Gastrocnemius medialis (tissue), 4 donors: ENCODE measurements at regions of chr6 and their contacts with region 1.

Region 1: DNA sequence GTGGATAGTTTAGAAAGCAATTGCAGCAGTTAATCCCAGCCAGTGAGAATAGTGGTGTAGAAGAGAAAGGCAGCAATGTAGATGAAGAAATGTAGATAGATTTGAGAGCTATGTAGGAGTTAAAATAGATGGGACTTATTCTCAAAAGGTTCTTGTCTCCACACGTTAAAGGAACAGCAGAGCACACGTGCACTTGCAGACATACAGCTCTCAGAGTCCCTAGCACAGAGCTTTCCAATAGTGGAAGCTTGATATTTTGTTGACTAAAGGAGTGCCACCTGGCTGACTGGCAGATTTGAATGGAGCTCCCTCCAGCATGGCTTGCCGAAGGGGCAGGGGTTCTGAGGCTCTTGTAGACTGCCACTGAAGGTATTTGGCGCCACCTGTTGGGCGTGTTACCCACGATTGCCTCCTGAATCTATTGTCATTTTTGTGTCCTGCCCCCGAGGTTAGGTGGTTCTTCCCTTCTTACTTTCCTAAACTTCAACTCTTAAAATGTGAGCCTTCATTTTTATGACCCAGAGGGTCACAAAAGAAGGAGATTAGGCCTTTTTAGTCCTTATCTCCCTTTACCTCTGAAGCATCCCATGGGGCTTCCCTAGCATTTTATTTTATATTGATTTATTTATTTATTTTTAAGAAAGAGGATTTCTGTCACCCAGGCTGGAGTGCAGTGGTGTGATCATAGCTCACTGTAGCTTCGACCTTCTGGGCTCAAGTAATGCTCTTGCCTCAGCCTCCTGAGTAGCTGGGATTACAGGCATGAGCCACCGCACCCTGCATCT is 16.4 kb downstream of the BRD2 start:
- DNase-seq: peak; percentile 84 to 89
- ATAC-seq: peak; percentile 92 to 93
- H3K4me3 ChIP-seq: no peak overlapping the region
- H3K27ac ChIP-seq: peak overlapping the region in 2 of 4 donors; percentile 45 to 59
- H3K4me1 ChIP-seq: peaks cover 23 to 29% of the 10 kb centered on the region in 2 donors
- H3K27me3 ChIP-seq: no peaks in the 10 kb centered on the region
- CTCF ChIP-seq: peak; percentile 86 to 94 (median 92)
- POLR2A ChIP-seq: no peak

Region 2: DNA sequence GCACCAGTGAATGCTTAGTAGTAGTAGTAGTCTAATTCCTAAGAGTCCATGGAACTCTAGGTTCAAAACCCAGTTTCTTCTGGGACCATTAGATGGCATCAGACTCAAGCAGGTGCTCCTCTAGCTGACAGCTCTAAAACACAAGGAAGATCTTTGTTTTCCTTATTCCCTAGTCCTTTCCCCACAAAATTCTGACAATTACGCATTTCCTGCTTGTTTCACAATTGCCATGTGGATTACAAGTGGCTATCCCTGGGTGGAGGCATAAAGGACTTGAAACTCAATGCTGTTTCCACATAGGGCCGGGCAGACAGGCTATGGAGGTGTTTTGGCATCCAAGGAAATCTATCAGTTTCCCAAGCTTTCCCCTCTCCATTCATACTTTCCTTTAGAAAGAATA is 158.8 kb before region 1 on chr6:
- in situ Hi-C with region 1: no loop called
- intact Hi-C with region 1: no loop called
- DNase-seq: no peak
- ATAC-seq: peak; percentile 56 to 81
- H3K4me3 ChIP-seq: no peak overlapping the region
- H3K27ac ChIP-seq: peak overlapping the region in 3 of 4 donors; percentile 3 to 27 (median 21)
- H3K4me1 ChIP-seq: no peaks in the 10 kb centered on the region
- H3K27me3 ChIP-seq: no peaks in the 10 kb centered on the region
- CTCF ChIP-seq: peak in 4 of 5 experiments; percentile 23 to 47 (median 30)
- POLR2A ChIP-seq: no peak

Region 3: DNA sequence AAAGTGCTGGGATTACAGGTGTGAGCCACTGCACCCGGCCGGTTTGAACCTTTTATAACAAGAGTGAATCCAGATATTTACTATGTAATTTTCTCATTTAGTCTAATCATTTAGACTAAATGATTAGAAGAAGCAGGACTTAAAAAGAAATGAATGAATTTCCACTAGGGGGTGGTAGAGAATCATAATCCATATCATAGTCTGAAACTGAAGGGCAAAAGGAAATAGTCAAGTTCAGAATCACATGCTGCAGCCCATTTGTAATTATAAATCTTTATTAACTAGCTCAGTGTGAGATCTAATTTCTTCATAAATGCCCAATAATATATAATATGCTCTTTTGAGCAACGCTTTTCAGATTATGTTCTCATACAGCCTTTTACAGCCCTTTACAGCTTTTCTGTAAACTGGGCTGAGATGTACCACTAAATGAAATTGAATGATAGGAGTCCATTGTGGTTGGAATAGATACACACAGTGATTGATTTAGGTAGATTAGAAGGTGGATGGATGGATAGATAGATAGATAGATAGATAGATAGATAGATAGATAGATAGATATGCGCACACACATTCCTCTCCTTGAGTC is 99.0 kb before region 1 on chr6:
- in situ Hi-C with region 1: loop called (anchors 5 to 25 kb)
- intact Hi-C with region 1: loop called (anchors 1 kb)
- DNase-seq: no peak
- ATAC-seq: peak; percentile 43 to 51
- H3K4me3 ChIP-seq: no peak overlapping the region
- H3K27ac ChIP-seq: no peak overlapping the region
- H3K4me1 ChIP-seq: peaks cover 5 to 9% of the 10 kb centered on the region in 2 donors
- H3K27me3 ChIP-seq: no peaks in the 10 kb centered on the region
- CTCF ChIP-seq: peak; percentile 49 to 76 (median 65)
- POLR2A ChIP-seq: no peak

Region 4: DNA sequence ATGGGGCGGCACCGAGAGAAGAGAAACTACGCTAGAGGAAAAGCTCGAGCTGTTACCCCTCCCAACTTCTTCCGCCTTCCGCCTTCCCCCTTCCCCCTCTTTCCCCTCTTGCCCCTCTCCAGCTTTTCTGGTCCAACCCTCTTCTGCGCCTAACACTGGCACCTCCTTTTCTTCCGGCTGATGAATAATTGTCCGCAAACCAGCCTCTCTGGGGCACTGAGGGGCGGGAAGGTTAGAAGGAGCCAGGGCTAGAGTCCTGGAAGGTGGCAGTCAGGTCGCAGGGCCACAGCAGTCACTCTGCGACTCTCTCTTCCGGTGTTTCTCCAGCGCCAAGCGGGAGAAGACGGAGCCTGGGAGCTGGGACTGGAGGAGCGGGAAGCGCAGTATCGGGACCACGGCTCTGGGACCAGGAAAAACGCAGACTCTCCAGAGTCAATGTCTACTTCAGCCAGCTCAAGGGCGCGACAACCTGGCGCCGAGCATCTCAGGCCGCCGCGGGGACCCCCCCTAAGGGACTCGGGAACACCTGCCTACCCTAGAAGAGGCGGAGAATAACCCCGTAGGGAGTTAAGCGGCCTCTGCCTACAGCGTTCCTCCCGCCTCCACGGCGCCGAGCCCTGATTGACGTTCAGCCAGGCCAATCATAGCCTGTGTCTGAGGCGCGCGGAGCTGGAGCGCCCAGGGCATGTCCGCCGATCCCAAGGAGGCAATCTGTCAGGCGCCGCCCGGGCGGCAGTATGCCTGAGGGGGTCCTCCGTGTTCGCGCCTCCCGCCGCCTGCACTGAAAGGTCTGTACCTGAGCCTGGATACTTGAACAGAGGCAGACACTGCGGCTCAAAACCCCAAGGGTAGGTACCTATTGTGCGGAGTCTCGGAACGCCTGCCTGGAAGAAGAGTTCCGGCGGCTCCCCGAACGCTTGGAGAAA is 90.5 kb before region 1 on chr6:
- in situ Hi-C with region 1: loop called (anchors 5 to 25 kb)
- intact Hi-C with region 1: loop called (anchors 2 kb)
- DNase-seq: peak; percentile 85 to 91
- ATAC-seq: peak; percentile 98 to 99
- H3K4me3 ChIP-seq: peak overlapping the region; percentile 81 to 85 (median 82)
- H3K27ac ChIP-seq: peak overlapping the region; percentile 83 to 87 (median 86)
- H3K4me1 ChIP-seq: peaks cover 9 to 13% of the 10 kb centered on the region in 2 donors
- H3K27me3 ChIP-seq: no peaks in the 10 kb centered on the region
- CTCF ChIP-seq: no peak
- POLR2A ChIP-seq: peak; percentile 55 to 76

Region 5: GRCh38 chr6:32933636-32934085 is 51.1 kb before region 1 on chr6:
- in situ Hi-C with region 1: loop called (anchors 5 kb)
- intact Hi-C with region 1: loop called (anchors 1 kb)
- DNase-seq: peak; percentile 33 to 70
- ATAC-seq: peak; percentile 54 to 77
- H3K4me3 ChIP-seq: no peak overlapping the region
- H3K27ac ChIP-seq: no peak overlapping the region
- H3K4me1 ChIP-seq: no peaks in the 10 kb centered on the region
- H3K27me3 ChIP-seq: no peaks in the 10 kb centered on the region
- CTCF ChIP-seq: peak; percentile 74 to 88 (median 86)
- POLR2A ChIP-seq: no peak

Region 6: DNA sequence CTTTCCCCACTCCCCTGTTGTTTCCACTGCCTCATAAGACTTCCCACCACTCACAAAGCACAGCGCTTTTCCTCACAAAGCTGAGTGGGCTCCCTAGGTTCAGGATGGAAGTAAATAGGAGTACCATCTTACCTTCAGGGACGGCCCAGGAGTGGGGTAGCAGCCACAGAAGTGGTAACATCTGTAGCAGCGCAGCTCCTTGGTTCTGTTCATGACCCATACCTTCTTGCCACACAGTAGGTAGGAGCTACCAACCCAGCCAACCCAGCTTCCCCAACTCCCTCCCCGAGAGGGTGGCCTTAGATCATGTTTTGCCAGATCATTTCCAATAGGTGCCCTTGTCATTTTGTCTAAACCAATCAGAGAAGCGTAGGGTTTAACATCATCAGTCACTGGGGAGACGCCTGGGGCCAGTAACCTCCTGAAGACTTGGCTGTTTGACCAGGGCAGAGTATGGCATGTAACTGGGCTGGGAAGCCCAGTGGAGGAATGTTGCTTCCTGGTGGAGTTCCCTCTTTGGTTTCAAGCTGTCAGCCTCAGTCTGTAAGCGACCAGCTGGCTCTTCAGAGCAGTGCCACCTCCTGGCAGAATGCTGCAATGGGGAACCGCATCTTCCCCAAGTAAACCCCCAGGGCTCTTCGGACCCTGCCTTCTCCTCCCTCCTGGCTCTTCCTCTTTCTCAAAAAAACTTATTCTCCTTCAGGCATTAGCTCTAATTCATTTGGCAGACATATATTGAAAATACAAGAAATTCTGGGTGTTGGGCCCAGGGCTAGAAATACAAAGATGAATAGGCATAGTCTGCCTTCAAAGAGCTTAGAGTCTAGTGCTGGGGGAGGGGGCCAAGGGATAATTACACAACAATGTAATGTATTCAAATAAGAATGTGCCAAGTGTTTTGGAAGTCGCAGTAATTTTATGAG is 31.7 kb before region 1 on chr6 and contains the start of gene HLA-DMA:
- in situ Hi-C with region 1: no loop called
- intact Hi-C with region 1: loop called (anchors 2 kb)
- DNase-seq: peak; percentile 81 to 94
- ATAC-seq: peak; percentile 99 to 100
- H3K4me3 ChIP-seq: peak within 1 kb of the TSS; percentile 3 to 44 (median 22)
- H3K27ac ChIP-seq: peak within 1 kb of the TSS; percentile 68 to 85 (median 75)
- H3K4me1 ChIP-seq: peaks cover 6 to 8% of the 10 kb centered on the region in 2 donors
- H3K27me3 ChIP-seq: no peaks in the 10 kb centered on the region
- CTCF ChIP-seq: peak; percentile 81 to 87 (median 84)
- POLR2A ChIP-seq: peak; percentile 48 to 72
- total RNA-seq, gene HLA-DMA: 3.6 to 22.8 (median 6.3) TPM